ENCODE measurements at regions of chr6 and their contacts with region 1.

Region 1: DNA sequence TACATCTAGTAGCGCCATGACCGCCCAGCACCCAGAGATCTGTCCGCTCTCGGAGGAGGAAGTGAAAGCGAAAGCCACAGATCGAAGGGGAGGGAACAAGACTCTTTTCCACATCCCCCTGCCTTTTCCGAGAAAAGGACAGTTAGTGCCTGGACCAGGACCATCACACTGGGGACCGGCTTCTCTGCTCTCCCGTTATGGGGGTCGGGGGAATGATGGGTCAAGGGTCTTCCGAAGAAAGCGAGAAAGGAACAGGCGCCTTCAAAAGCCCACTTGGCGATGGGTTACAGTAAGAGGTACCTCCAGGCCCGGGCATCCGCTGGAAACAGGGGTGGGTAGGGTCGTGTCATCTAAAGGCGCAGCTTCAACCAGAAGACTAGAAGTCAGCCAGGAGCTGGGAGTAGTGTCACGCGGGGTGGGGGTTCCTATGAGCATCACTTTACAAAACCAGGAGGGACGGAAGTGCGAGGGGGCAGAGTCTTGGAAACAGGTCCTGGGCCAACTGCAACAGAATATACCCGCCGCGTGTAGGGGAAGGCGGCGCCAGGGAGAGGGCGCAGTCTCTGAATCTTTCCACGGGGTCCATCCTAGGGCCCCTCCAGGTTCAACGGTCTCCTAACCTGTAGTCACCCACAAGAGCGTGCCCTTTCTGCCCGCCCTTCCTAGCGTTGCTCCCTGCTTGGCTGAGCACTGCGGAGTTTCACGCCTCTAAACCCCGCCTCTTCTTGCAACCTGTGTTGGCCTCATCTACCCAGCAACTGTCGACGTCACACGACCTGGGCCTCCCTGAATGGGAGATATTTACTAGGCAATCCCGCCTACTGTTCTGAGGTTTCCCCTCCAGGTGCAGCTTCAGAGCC is at the start of gene PSMB8:
- DNase-seq: peak; percentile 96 to 99 (median 99)
- ATAC-seq: peak; percentile 75
- H3K4me3 ChIP-seq: peak within 1 kb of the TSS; percentile 99
- H3K4me3 Mint-ChIP-seq: peak within 1 kb of the TSS; percentile 99
- H3K27ac ChIP-seq: peak within 1 kb of the TSS; percentile 96 to 100
- H3K27ac Mint-ChIP-seq: peak within 1 kb of the TSS; percentile 99
- H3K4me1 ChIP-seq: peaks cover 79% of the 10 kb centered on the region
- H3K4me1 Mint-ChIP-seq: peaks cover 83% of the 10 kb centered on the region
- H3K27me3 ChIP-seq: no peaks in the 10 kb centered on the region
- H3K27me3 Mint-ChIP-seq: no peaks in the 10 kb centered on the region
- CTCF ChIP-seq: no peak
- total RNA-seq, gene PSMB8: 108 to 117 TPM

Region 2: DNA sequence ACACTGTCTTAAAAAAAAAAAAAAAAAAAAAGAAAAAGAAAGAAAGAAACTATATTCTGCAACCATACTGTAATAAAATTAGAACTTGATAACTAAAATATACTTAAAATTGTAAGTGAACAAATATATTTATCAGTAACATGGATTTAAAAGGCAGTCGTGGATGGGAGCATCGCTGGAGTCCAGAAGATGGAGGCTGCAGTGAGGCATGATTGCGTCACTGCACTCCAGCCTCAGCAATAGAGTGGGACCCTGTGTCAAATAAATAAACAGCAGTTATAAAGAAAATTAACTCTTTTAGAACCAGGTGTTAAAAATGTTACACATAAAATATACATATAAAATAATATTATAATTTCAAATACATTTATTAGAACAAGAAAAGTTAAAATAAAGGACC is 18.5 kb after region 1 on chr6:
- CTCF ChIA-PET with region 1: interaction called, 320 read pairs
- POLR2A ChIA-PET with region 1: interaction called, 84 read pairs
- intact Hi-C with region 1: no loop called
- DNase-seq: no peak
- ATAC-seq: no peak
- H3K4me3 ChIP-seq: no peak overlapping the region
- H3K4me3 Mint-ChIP-seq: no peak overlapping the region
- H3K27ac ChIP-seq: no peak overlapping the region
- H3K27ac Mint-ChIP-seq: peak overlapping the region; percentile 60
- H3K4me1 ChIP-seq: peaks cover 35% of the 10 kb centered on the region
- H3K4me1 Mint-ChIP-seq: peaks cover 46% of the 10 kb centered on the region
- H3K27me3 ChIP-seq: no peaks in the 10 kb centered on the region
- H3K27me3 Mint-ChIP-seq: no peaks in the 10 kb centered on the region
- CTCF ChIP-seq: no peak

Region 3: DNA sequence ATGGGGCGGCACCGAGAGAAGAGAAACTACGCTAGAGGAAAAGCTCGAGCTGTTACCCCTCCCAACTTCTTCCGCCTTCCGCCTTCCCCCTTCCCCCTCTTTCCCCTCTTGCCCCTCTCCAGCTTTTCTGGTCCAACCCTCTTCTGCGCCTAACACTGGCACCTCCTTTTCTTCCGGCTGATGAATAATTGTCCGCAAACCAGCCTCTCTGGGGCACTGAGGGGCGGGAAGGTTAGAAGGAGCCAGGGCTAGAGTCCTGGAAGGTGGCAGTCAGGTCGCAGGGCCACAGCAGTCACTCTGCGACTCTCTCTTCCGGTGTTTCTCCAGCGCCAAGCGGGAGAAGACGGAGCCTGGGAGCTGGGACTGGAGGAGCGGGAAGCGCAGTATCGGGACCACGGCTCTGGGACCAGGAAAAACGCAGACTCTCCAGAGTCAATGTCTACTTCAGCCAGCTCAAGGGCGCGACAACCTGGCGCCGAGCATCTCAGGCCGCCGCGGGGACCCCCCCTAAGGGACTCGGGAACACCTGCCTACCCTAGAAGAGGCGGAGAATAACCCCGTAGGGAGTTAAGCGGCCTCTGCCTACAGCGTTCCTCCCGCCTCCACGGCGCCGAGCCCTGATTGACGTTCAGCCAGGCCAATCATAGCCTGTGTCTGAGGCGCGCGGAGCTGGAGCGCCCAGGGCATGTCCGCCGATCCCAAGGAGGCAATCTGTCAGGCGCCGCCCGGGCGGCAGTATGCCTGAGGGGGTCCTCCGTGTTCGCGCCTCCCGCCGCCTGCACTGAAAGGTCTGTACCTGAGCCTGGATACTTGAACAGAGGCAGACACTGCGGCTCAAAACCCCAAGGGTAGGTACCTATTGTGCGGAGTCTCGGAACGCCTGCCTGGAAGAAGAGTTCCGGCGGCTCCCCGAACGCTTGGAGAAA is 50.1 kb after region 1 on chr6:
- CTCF ChIA-PET with region 1: interaction called, 8 read pairs
- POLR2A ChIA-PET with region 1: interaction called, 10 read pairs
- intact Hi-C with region 1: no loop called
- DNase-seq: peak; percentile 88 to 98 (median 95)
- ATAC-seq: peak; percentile 96
- H3K4me3 ChIP-seq: peak overlapping the region; percentile 89 to 92
- H3K4me3 Mint-ChIP-seq: peak overlapping the region; percentile 99
- H3K27ac ChIP-seq: peak overlapping the region; percentile 62 to 89
- H3K27ac Mint-ChIP-seq: peak overlapping the region; percentile 97
- H3K4me1 ChIP-seq: peaks cover 20% of the 10 kb centered on the region
- H3K4me1 Mint-ChIP-seq: peaks cover 46% of the 10 kb centered on the region
- H3K27me3 ChIP-seq: no peaks in the 10 kb centered on the region
- H3K27me3 Mint-ChIP-seq: no peaks in the 10 kb centered on the region
- CTCF ChIP-seq: no peak

Region 4: DNA sequence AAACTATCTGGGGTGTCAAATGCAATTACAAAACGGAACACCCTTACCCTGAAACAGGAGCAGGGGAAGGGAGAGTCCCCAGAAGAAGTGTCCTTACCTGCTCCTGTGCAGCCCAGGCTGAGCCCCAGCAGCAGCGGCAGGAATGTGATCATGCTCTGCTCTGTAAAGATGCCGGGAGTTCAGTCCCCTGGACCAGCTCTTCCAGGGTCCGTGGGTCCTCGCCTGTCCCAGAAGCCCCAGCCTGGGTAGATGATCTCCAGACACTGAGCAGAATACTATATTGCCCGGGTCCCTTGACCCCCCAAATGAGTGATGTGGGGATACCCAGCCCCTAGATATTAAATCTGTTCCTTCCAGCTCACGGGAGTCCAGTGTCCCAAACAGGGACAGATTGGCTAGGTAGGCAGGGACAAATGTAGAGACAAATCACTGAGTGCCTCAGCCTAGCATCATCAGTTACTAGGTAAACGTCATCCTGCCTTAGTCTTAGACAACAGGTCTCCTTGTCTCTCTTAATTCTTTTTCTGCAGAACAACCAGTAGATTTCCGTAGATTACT is 96.5 kb after region 1 on chr6 and contains the start of gene HLA-DMB:
- CTCF ChIA-PET with region 1: interaction called, 7 read pairs
- POLR2A ChIA-PET with region 1: interaction called, 15 read pairs
- intact Hi-C with region 1: no loop called
- DNase-seq: peak in 7 of 9 experiments; percentile 18 to 91 (median 51)
- ATAC-seq: peak; percentile 78
- H3K4me3 ChIP-seq: peak within 1 kb of the TSS; percentile 64 to 79
- H3K4me3 Mint-ChIP-seq: peak within 1 kb of the TSS; percentile 94
- H3K27ac ChIP-seq: peak within 1 kb of the TSS; percentile 72 to 91
- H3K27ac Mint-ChIP-seq: peak within 1 kb of the TSS; percentile 97
- H3K4me1 ChIP-seq: peaks cover 61% of the 10 kb centered on the region
- H3K4me1 Mint-ChIP-seq: peaks cover 62% of the 10 kb centered on the region
- H3K27me3 ChIP-seq: no peaks in the 10 kb centered on the region
- H3K27me3 Mint-ChIP-seq: no peaks in the 10 kb centered on the region
- CTCF ChIP-seq: no peak
- total RNA-seq, gene HLA-DMB: 8.9 to 9.9 TPM

Region 5: GRCh38 chr6:33417903-33418689 is 573.9 kb after region 1 on chr6 and contains the start of gene CUTA:
- CTCF ChIA-PET with region 1: no interaction called
- POLR2A ChIA-PET with region 1: no interaction called
- intact Hi-C with region 1: loop called in 1 of 2 experiments (anchors 10 kb)
- DNase-seq: peak; percentile 96 to 100 (median 99)
- ATAC-seq: peak; percentile 87
- H3K4me3 ChIP-seq: peak within 1 kb of the TSS; percentile 68 to 70
- H3K4me3 Mint-ChIP-seq: peak within 1 kb of the TSS; percentile 94
- H3K27ac ChIP-seq: peak within 1 kb of the TSS; percentile 83 to 88
- H3K27ac Mint-ChIP-seq: peak within 1 kb of the TSS; percentile 97
- H3K4me1 ChIP-seq: peaks cover 68% of the 10 kb centered on the region
- H3K4me1 Mint-ChIP-seq: peaks cover 83% of the 10 kb centered on the region
- H3K27me3 ChIP-seq: no peaks in the 10 kb centered on the region
- H3K27me3 Mint-ChIP-seq: no peaks in the 10 kb centered on the region
- CTCF ChIP-seq: peak; percentile 27
- total RNA-seq, gene CUTA: 159 to 177 TPM

Measured in CD8-positive, alpha-beta T cell (primary cell).